Activated CD8-positive, alpha-beta memory T cell treated with anti-CD3 and anti-CD28 coated beads, Interleukin-2, amount 10 ng/mL, durations not matched to agents 7 days and 5 days (primary cell): ENCODE measurements at regions of chr15 and their contacts with region 1.

Region 1: DNA sequence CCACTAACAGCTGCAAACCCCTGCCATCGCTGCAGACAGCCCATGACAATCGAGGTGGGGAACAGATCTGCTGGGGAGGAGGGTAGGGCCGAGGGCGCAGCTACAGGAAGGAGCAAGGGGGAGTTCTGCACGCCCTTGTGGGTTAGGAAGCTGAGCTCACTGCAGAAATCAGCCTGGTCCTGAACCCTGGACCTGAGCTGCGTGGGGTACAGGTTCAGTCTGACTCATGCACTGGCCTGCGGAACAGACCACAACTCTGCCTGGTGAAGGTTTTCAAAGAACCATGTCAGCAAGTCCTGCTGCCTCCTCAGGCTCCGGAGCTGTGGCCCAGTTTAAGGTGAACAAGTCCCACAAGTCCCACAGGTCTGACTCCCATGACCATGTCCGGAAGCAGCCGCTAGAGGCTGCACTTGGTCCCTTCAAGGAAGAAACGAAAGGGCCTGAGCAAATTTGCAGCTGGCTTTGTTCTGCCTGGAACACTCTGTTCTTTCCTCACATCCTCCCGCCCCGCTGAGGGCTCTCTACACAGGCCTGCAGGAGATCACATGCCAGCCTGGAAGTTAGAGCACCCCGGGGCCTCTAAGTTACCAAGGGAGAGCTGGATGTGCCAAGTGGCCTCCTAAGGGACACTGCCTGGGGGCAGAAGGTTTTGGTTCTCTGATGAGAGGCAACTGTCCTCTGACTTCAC is 49.4 kb upstream of the AKAP13 start:
- DNase-seq: peak; percentile 98
- ATAC-seq: peak; percentile 84
- H3K4me3 Mint-ChIP-seq: peak overlapping the region; percentile 82
- H3K27ac Mint-ChIP-seq: peak overlapping the region; percentile 97
- H3K4me1 Mint-ChIP-seq: peaks cover 48% of the 10 kb centered on the region
- H3K27me3 Mint-ChIP-seq: no peaks in the 10 kb centered on the region

Region 2: GRCh38 chr15:85296615-85297402 is 34.2 kb before region 1 on chr15:
- CTCF ChIA-PET with region 1: interaction called, 88 read pairs
- DNase-seq: peak; percentile 84
- ATAC-seq: peak; percentile 100
- H3K4me3 Mint-ChIP-seq: peak overlapping the region; percentile 50
- H3K27ac Mint-ChIP-seq: peak overlapping the region; percentile 61
- H3K4me1 Mint-ChIP-seq: peaks cover 21% of the 10 kb centered on the region
- H3K27me3 Mint-ChIP-seq: peaks cover 1% of the 10 kb centered on the region

Region 3: DNA sequence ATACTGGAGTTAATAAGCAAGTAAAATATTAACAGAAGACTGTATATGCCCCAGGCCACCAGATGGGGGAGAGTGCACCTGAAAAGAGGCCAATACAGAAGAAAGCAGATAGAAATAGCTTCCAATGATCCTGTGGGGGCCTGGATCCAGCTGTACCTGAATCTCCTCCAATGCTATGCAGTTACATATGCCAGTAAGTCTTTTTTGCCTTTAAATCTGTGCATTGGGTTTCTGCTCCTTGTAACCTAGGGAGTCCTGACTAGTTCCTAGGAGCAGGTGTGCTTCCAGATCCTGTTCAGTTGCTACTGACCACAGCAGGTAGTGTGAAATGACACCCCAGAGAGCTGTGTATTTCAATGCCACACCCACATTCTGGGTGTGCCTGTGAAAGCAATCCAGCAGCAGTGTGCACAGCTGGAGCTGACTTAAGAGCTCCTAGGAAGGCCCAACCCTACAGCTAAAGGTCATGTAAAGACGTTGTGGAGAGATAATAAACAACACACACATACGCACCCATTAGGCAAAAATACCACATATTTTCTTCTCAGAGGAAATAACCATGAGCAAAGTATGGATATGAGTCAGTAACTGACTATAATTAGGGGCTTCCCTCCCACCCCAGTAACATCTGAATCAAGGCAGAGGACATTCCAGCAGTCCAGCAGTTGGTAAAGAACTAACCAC is 12.9 kb before region 1 on chr15:
- CTCF ChIA-PET with region 1: interaction called, 146 read pairs
- DNase-seq: peak; percentile 80
- ATAC-seq: peak; percentile 84
- H3K4me3 Mint-ChIP-seq: peak overlapping the region; percentile 34
- H3K27ac Mint-ChIP-seq: peak overlapping the region; percentile 87
- H3K4me1 Mint-ChIP-seq: peaks cover 53% of the 10 kb centered on the region
- H3K27me3 Mint-ChIP-seq: no peaks in the 10 kb centered on the region

Region 4: DNA sequence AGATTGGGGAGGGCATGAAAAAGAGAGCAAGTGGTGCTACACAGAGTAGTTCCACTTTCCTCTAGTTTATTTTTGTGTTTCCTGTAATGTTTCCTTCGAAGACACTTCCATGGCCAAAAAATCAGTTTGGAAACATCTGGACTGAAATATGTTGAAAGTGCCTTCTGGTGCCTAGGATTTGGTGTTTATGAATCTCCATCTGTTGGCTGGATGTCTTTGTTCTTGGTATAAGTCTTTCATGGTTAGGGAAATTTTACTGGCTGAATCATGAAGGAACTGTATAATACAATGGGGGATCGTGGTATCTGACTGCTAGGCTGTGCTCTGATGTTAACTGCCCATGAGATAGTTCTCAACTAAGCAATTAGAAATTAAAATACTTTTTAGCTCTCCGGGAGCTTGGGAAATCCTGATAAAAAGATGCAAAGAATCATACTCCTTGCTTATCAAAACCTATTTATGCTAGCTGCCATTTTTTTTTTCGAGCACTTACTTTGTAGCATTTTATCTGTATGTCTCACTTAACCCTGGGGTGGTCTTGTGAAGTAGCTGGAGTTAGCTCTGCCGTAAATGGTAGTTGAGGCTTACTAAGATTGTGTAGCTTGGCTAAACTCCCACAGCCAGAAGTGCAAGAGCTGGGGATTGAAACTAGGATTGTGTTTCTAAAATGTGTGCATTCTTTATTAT is 71.3 kb after region 1 on chr15:
- CTCF ChIA-PET with region 1: interaction called, 26 read pairs
- DNase-seq: no peak
- ATAC-seq: no peak
- H3K4me3 Mint-ChIP-seq: peak overlapping the region; percentile 38
- H3K27ac Mint-ChIP-seq: peak overlapping the region; percentile 68
- H3K4me1 Mint-ChIP-seq: peaks cover 58% of the 10 kb centered on the region
- H3K27me3 Mint-ChIP-seq: no peaks in the 10 kb centered on the region

Region 5: DNA sequence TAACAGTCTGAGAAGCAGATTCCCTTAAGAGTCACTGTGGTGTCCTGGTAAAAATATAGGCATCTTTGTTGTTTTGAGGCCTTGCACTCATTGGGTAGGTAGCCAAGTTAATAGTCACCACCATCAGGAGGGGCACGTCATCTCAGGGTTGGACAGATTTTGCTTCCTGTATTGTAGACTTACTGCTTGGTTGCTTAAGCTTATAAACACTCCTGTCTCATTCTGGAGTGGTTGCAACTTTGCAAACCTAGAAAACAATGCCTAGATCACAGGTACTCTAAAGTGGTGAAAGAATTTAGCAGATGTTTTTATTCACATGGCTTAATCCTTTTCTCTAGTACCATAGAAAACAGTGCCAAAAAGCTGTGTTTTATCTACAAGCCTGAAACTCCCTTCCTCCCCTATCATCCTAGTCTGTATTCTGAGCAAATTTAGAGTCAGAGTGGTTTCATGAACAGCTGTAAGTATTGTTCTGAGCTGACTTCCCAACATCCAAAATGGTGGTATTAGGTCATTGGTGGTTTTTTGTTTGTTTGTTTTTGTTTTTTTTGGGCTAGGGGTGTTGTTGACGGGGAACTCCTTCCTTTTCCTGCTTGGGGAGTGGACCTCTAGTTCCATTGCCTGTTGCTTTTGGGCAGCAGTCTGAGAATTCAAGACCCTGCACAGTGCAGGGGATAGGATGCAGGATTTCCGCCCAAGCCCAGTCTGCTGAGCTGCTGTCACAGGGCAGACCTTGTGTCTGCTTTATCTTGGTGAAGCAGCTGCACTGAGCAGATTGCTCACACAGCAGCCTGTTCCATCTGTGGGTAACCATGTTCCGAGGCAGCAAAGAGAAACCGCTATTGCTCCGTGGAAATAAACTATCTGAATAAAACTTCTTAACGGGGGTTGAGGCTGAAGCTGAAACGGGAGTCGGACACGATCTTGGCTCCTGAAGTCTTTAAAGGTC is 251.4 kb after region 1 on chr15:
- CTCF ChIA-PET with region 1: interaction called, 12 read pairs
- DNase-seq: peak; percentile 88
- ATAC-seq: peak; percentile 84
- H3K4me3 Mint-ChIP-seq: peak overlapping the region; percentile 82
- H3K27ac Mint-ChIP-seq: peak overlapping the region; percentile 99
- H3K4me1 Mint-ChIP-seq: peaks cover 77% of the 10 kb centered on the region
- H3K27me3 Mint-ChIP-seq: no peaks in the 10 kb centered on the region